ENCODE measurements at regions of chr1 and their contacts with region 1.

Region 1: GRCh38 chr1:113835642-113836307 is 23.5 kb upstream of the RSBN1 start:
- DNase-seq: peak; percentile 41
- ATAC-seq: no peak
- H3K4me3 Mint-ChIP-seq: no peak overlapping the region
- H3K27ac Mint-ChIP-seq: no peak overlapping the region
- H3K4me1 Mint-ChIP-seq: peaks cover 5% of the 10 kb centered on the region
- H3K27me3 Mint-ChIP-seq: no peaks in the 10 kb centered on the region

Region 2: DNA sequence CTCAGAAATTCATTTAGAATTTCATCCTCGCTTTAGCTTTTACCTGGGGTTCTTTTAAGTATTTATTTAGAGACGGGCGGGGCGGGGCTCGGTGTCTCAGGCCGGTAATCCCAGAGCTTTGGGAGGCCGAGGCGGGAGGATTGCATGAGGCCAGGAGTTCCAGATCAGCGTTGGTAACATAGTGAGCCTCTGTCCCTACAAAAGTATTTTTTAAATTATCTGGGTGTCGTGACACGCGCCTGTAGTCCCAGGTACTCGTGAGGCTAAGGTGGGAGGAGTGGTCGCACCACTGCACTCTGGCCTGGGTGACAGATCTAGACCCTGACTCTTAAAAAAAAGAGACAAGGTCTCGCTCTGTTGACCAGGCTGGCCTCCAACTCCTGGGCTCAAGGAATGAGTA is 22.6 kb before region 1 on chr1:
- CTCF ChIA-PET with region 1: no interaction called
- POLR2A ChIA-PET with region 1: no interaction called
- DNase-seq: no peak
- ATAC-seq: no peak
- H3K4me3 Mint-ChIP-seq: peak overlapping the region; percentile 98
- H3K27ac Mint-ChIP-seq: peak overlapping the region; percentile 98
- H3K4me1 Mint-ChIP-seq: peaks cover 28% of the 10 kb centered on the region
- H3K27me3 Mint-ChIP-seq: no peaks in the 10 kb centered on the region

Region 3: GRCh38 chr1:113849060-113849459 is 13.3 kb after region 1 on chr1:
- CTCF ChIA-PET with region 1: no interaction called
- POLR2A ChIA-PET with region 1: no interaction called
- DNase-seq: no peak
- ATAC-seq: no peak
- H3K4me3 Mint-ChIP-seq: no peak overlapping the region
- H3K27ac Mint-ChIP-seq: no peak overlapping the region
- H3K4me1 Mint-ChIP-seq: peaks cover 23% of the 10 kb centered on the region
- H3K27me3 Mint-ChIP-seq: no peaks in the 10 kb centered on the region

Region 4: DNA sequence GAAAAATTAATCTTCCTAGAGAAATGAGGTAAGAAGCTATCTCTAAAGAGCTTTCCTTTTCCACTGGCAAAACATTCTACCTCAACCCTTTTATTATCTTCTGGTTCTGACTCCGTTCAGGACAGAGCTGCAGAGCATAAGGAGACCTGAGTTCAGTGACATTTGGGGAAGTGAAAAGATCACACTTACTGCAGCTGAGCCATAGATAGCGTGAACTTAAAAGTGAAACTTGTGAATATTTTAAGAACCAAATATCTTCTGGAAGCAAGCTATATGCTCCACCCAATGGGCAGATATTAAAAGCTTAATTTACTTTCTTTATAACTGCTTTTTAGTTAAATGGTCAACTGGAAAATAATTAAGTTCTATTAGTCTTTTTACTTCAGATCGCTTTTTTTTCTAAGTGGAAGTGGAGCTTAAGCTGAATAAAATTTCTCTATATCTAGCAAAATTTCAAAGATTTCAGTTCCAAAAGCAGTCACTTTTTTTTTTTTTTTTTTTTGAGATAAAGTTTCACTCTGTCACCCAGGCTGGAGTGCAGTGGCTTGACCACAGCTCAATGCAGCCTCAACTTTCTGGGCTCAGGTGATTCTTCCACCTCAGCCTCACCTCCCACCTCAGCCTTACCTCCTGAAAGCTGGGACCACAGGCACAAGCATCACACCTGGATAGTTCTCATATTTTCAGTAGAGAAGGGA is 23.9 kb after region 1 on chr1:
- CTCF ChIA-PET with region 1: interaction called, 17 read pairs
- POLR2A ChIA-PET with region 1: no interaction called
- DNase-seq: no peak
- ATAC-seq: peak; percentile 45
- H3K4me3 Mint-ChIP-seq: no peak overlapping the region
- H3K27ac Mint-ChIP-seq: peak overlapping the region; percentile 53
- H3K4me1 Mint-ChIP-seq: peaks cover 41% of the 10 kb centered on the region
- H3K27me3 Mint-ChIP-seq: no peaks in the 10 kb centered on the region

Region 5: GRCh38 chr1:113871597-113872113 is 35.9 kb after region 1 on chr1 and contains the start of gene PTPN22:
- CTCF ChIA-PET with region 1: interaction called, 17 read pairs
- POLR2A ChIA-PET with region 1: interaction called, 3 read pairs
- DNase-seq: peak; percentile 91
- ATAC-seq: peak; percentile 87
- H3K4me3 Mint-ChIP-seq: peak within 1 kb of the TSS; percentile 84
- H3K27ac Mint-ChIP-seq: peak within 1 kb of the TSS; percentile 99
- H3K4me1 Mint-ChIP-seq: peaks cover 75% of the 10 kb centered on the region
- H3K27me3 Mint-ChIP-seq: no peaks in the 10 kb centered on the region
- total RNA-seq, gene PTPN22: 74.8 to 78.9 TPM

Region 6: GRCh38 chr1:113940365-113941244 is 104.8 kb after region 1 on chr1:
- CTCF ChIA-PET with region 1: interaction called, 10 read pairs
- POLR2A ChIA-PET with region 1: no interaction called
- DNase-seq: peak; percentile 73
- ATAC-seq: peak; percentile 63
- H3K4me3 Mint-ChIP-seq: peak overlapping the region; percentile 65
- H3K27ac Mint-ChIP-seq: peak overlapping the region; percentile 86
- H3K4me1 Mint-ChIP-seq: peaks cover 76% of the 10 kb centered on the region
- H3K27me3 Mint-ChIP-seq: no peaks in the 10 kb centered on the region

Region 7: DNA sequence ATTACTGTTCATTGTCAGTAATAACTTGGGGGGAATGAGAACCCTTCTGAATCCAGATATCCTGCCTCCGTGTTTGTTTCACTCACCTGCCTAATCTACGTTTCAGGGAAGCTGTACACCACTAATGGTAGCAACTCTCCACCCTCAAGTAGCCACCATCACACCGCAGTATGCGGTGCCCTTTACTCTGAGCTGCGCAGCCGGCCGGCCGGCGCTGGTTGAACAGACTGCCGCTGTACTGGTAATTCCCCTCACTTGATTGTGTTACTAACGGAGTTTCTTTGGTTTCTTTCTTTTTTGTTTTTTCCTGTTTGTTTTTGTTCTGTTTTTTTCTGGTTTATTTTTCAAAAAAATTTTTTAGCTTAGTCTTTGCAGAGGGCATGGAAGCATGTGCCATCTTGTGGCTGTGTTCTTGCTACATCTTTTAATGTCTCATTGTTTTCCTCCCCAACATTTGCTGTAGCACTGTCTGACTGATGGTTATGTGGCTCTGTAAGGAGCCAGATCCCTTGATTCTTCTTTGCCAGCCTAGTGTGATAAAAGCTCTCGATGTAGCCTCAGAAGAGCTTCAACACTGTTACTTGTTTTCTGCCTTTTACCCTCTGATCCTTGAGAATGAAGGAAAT is 127.6 kb after region 1 on chr1:
- CTCF ChIA-PET with region 1: interaction called, 15 read pairs
- POLR2A ChIA-PET with region 1: no interaction called
- DNase-seq: no peak
- ATAC-seq: no peak
- H3K4me3 Mint-ChIP-seq: no peak overlapping the region
- H3K27ac Mint-ChIP-seq: no peak overlapping the region
- H3K4me1 Mint-ChIP-seq: peaks cover 6% of the 10 kb centered on the region
- H3K27me3 Mint-ChIP-seq: no peaks in the 10 kb centered on the region

Measured in activated CD8-positive, alpha-beta T cell treated with anti-CD3 and anti-CD28 coated beads, Interleukin-2, amount 10 ng/mL, durations not matched to agents 7 days and 5 days (primary cell).